Gastrocnemius medialis (tissue), 4 donors: ENCODE measurements at regions of chr6 and their contacts with region 1.

Region 1: DNA sequence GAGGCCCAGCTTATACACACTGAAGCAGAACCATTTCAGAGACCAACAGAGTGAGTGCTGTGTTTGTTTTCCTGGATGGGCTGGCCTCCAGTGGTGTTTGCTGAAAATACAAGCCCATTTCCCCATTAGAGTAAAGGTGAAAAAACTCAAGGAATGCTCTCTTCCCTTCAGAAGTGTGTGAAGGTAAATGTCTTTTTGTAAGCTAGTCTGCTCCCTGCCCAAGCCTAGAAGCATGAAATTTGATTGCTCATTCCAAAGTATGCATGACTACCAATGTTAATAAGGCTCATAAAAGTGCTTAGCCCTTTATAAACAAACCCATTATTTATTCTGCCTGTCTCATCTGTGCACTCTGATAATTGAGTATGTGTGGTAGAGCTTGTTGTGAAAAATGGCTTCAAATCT is 59.1 kb downstream of the ADGRF1 start:
- DNase-seq: no peak
- ATAC-seq: no peak
- H3K4me3 ChIP-seq: no peak overlapping the region
- H3K27ac ChIP-seq: no peak overlapping the region
- H3K4me1 ChIP-seq: no peaks in the 10 kb centered on the region
- H3K27me3 ChIP-seq: no peaks in the 10 kb centered on the region
- CTCF ChIP-seq: no peak
- POLR2A ChIP-seq: no peak

Region 2: GRCh38 chr6:46903175-46903574 is 79.8 kb before region 1 on chr6:
- in situ Hi-C with region 1: no loop called
- intact Hi-C with region 1: loop called (anchors 10 kb)
- DNase-seq: no peak
- ATAC-seq: peak in 1 of 2 donors; percentile 38
- H3K4me3 ChIP-seq: peak overlapping the region in 1 of 4 donors; percentile 7
- H3K27ac ChIP-seq: peak overlapping the region; percentile 29 to 61 (median 53)
- H3K4me1 ChIP-seq: peaks cover 0 to 18% of the 10 kb centered on the region in 2 donors
- H3K27me3 ChIP-seq: no peaks in the 10 kb centered on the region
- CTCF ChIP-seq: no peak
- POLR2A ChIP-seq: no peak